Prostate gland (tissue), 2 donors: ENCODE measurements at regions of chr17 and their contacts with region 1.

Region 1: GRCh38 chr17:56592487-56593085 is 913 bp upstream of the NOG start:
- DNase-seq: peak; percentile 25
- H3K4me3 ChIP-seq: peak overlapping the region; percentile 39 to 42
- H3K27ac ChIP-seq: no peak overlapping the region
- H3K4me1 ChIP-seq: peaks cover 5% of the 10 kb centered on the region
- H3K27me3 ChIP-seq: no peaks in the 10 kb centered on the region
- CTCF ChIP-seq: peak; percentile 91 to 97 (median 94)
- POLR2A ChIP-seq: no peak

Region 2: DNA sequence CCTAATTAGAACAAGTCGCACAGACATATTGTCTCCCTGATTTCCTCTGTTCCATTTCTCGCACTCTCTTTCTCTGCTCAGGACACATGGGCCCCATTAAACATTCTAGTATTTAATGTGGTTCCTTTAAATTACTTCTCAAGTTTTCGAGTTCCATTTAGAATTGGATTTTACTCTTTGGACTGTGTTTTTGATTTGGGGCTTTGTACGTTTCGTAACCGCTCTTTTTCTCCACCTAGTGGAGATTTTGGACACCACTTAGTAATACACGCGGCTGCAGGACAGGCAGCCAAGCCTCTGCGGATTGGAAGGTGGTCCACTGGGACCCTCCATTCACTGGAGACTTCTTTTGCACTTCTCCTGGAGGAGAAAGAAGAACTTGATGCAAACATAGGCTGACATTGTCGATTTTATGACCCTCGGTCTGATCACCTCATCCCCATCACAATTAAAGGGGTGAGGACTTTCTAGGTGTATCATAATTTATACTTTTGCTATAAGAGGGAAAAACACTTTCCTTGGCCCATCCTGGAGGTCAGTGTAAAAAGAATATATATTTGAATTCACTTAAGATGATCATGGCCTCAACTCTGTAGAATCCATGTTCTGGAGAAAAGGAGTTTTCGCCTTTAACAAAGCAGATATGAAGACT is 86.7 kb after region 1 on chr17:
- intact Hi-C with region 1: loop called (anchors 10 kb)
- DNase-seq: no peak
- H3K4me3 ChIP-seq: no peak overlapping the region
- H3K27ac ChIP-seq: no peak overlapping the region
- H3K4me1 ChIP-seq: no peaks in the 10 kb centered on the region
- H3K27me3 ChIP-seq: no peaks in the 10 kb centered on the region
- CTCF ChIP-seq: peak; percentile 23 to 46 (median 41)
- POLR2A ChIP-seq: no peak

Region 3: GRCh38 chr17:56943505-56944125 is 351.0 kb after region 1 on chr17:
- intact Hi-C with region 1: no loop called
- DNase-seq: no peak
- H3K4me3 ChIP-seq: no peak overlapping the region
- H3K27ac ChIP-seq: no peak overlapping the region
- H3K4me1 ChIP-seq: no peaks in the 10 kb centered on the region
- H3K27me3 ChIP-seq: no peaks in the 10 kb centered on the region
- CTCF ChIP-seq: no peak
- POLR2A ChIP-seq: no peak